Gastrocnemius medialis (tissue), 4 donors: ENCODE measurements at regions of chr18 and their contacts with region 1.

Region 1: GRCh38 chr18:48022531-48023329 is 92.3 kb upstream of the SMAD2 start:
- DNase-seq: no peak
- ATAC-seq: peak; percentile 70 to 81
- H3K4me3 ChIP-seq: no peak overlapping the region
- H3K27ac ChIP-seq: no peak overlapping the region
- H3K4me1 ChIP-seq: peaks cover 5% of the 10 kb centered on the region in 2 donors
- H3K27me3 ChIP-seq: no peaks in the 10 kb centered on the region
- CTCF ChIP-seq: peak; percentile 25 to 67 (median 60)
- POLR2A ChIP-seq: no peak

Region 2: GRCh38 chr18:47772374-47773248 is 250.1 kb before region 1 on chr18:
- in situ Hi-C with region 1: loop called (anchors 5 to 10 kb)
- intact Hi-C with region 1: loop called (anchors 1 kb)
- DNase-seq: peak in 1 of 2 donors; percentile 30
- ATAC-seq: peak in 1 of 2 donors; percentile 53
- H3K4me3 ChIP-seq: no peak overlapping the region
- H3K27ac ChIP-seq: no peak overlapping the region
- H3K4me1 ChIP-seq: no peaks in the 10 kb centered on the region
- H3K27me3 ChIP-seq: no peaks in the 10 kb centered on the region
- CTCF ChIP-seq: peak; percentile 51 to 79 (median 73)
- POLR2A ChIP-seq: no peak

Region 3: GRCh38 chr18:48007955-48008701 is 14.6 kb before region 1 on chr18:
- in situ Hi-C with region 1: no loop called
- intact Hi-C with region 1: loop called (anchors 2 kb)
- DNase-seq: peak in 1 of 2 donors; percentile 32
- ATAC-seq: peak; percentile 69 to 78
- H3K4me3 ChIP-seq: peak overlapping the region; percentile 51 to 91 (median 65)
- H3K27ac ChIP-seq: no peak overlapping the region
- H3K4me1 ChIP-seq: peaks cover 0 to 8% of the 10 kb centered on the region in 2 donors
- H3K27me3 ChIP-seq: no peaks in the 10 kb centered on the region
- CTCF ChIP-seq: peak in 4 of 5 experiments; percentile 21 to 88 (median 46)
- POLR2A ChIP-seq: no peak